Ascending aorta (tissue), 2 donors: ENCODE measurements at regions of chr3 and their contacts with region 1.

Region 1: GRCh38 chr3:190120269-190121060 is at the start of gene P3H2:
- DNase-seq: peak; percentile 35 to 92
- H3K4me3 ChIP-seq: peak within 1 kb of the TSS; percentile 89 to 95
- H3K27ac ChIP-seq: peak within 1 kb of the TSS; percentile 91 to 92
- H3K4me1 ChIP-seq: peaks cover 4 to 11% of the 10 kb centered on the region in 2 donors
- H3K27me3 ChIP-seq: no peaks in the 10 kb centered on the region
- CTCF ChIP-seq: peak; percentile 59 to 73 (median 60)
- total RNA-seq, gene P3H2: 15.6 TPM

Region 2: GRCh38 chr3:189981668-189982067 is 138.8 kb before region 1 on chr3:
- intact Hi-C with region 1: loop called (anchors 5 kb)
- DNase-seq: peak in 1 of 2 donors; percentile 66
- H3K4me3 ChIP-seq: no peak overlapping the region
- H3K27ac ChIP-seq: no peak overlapping the region
- H3K4me1 ChIP-seq: peaks cover 0 to 4% of the 10 kb centered on the region in 2 donors
- H3K27me3 ChIP-seq: no peaks in the 10 kb centered on the region
- CTCF ChIP-seq: no peak

Region 3: DNA sequence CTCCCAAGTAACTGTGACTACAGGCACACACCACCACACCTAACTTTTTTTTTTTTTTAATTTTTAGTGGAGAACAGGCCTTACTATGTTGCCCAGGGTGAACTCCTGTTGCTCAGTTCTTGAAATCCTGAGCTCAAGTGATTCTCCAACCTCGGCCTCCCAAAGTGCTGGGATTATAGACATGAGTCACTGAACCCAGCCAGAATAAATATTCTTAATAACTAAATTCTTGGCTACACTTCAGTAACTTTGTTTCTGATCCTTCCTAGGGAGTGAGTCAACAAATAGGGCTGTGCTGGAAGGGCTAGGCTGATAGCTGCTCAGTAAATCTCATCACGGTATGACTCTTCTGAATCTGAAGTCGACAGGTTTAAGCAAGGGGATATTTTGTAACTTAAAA is 56.4 kb before region 1 on chr3:
- intact Hi-C with region 1: loop called (anchors 5 kb)
- DNase-seq: no peak
- H3K4me3 ChIP-seq: no peak overlapping the region
- H3K27ac ChIP-seq: no peak overlapping the region
- H3K4me1 ChIP-seq: no peaks in the 10 kb centered on the region
- H3K27me3 ChIP-seq: no peaks in the 10 kb centered on the region
- CTCF ChIP-seq: no peak

Region 4: DNA sequence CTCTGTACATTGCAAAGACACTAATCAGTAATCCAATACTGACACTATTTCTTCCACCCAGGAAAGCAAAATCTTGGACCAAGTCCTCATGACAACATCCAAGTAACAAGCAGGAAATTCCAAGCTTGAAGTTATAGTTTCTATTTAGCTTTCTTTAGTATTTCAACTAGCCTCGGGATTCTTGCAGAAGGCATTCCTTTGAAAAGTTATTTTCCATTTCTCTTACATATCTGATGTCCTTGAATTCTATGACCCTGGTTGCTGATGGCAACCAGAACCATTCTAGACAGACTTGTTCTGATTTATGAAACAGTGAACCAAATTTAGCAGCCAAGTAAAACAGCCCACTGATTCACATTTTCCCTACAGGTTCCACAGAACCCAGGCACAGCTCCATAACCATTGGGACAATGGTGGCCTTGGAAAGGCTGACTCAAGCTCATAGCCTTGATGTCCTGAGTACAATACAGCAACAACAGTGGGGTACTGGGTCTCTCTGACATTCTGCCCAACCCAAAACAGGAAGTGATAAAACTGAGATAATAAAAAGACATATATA is 26.2 kb before region 1 on chr3:
- intact Hi-C with region 1: loop called (anchors 2 kb)
- DNase-seq: peak; percentile 11 to 87
- H3K4me3 ChIP-seq: no peak overlapping the region
- H3K27ac ChIP-seq: peak overlapping the region; percentile 52 to 69
- H3K4me1 ChIP-seq: peaks cover 4 to 22% of the 10 kb centered on the region in 2 donors
- H3K27me3 ChIP-seq: no peaks in the 10 kb centered on the region
- CTCF ChIP-seq: no peak

Region 5: GRCh38 chr3:190155752-190156151 is 35.3 kb after region 1 on chr3:
- intact Hi-C with region 1: no loop called
- DNase-seq: no peak
- H3K4me3 ChIP-seq: no peak overlapping the region
- H3K27ac ChIP-seq: no peak overlapping the region
- H3K4me1 ChIP-seq: peaks cover 0 to 3% of the 10 kb centered on the region in 2 donors
- H3K27me3 ChIP-seq: no peaks in the 10 kb centered on the region
- CTCF ChIP-seq: no peak

Region 6: GRCh38 chr3:190205739-190206138 is 85.3 kb after region 1 on chr3:
- intact Hi-C with region 1: loop called (anchors 5 kb)
- DNase-seq: no peak
- H3K4me3 ChIP-seq: no peak overlapping the region
- H3K27ac ChIP-seq: no peak overlapping the region
- H3K4me1 ChIP-seq: no peaks in the 10 kb centered on the region
- H3K27me3 ChIP-seq: no peaks in the 10 kb centered on the region
- CTCF ChIP-seq: no peak